MCF 10A (cell line): ENCODE measurements at regions of chr11 and their contacts with region 1.

Region 1: DNA sequence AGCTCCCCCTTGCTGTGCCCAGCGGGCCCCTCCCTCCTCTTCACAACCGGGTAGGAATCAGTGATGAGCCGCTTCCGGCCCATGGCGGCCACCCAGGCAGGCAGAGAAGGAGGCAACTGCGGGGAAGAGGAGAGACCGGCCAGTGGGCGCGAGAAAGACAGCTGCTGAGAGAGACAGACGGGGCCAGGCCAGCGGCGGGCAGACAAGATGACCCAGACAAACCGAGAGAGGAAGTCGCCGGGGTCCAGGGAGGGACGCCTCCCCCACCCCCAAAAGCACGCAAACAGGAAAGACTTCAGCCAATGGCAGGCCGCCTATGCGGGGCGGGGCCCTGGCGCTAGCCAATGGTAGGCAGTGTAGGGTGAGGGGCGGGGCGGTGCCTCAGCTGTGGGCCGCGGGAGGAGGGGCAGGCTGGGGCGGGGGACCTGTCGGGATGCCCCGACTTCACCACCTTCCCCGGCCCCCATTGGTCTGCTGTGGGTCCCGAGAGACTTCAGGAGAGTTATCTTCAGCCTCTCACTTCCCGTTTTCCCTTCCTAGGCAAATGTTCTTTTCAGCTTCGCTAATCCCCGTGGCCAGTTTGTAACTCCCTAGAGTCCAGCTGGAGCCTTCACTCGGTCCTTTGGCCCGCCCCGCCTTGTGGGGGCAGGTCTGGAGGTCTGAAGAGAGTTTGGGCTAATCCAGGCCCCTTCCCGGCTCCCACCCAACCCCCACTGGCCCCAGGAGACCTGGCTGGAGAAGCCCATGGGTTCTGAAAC is at the start of gene POLD4:
- DNase-seq: peak; percentile 92
- H3K4me3 Mint-ChIP-seq: peak within 1 kb of the TSS; percentile 85
- H3K27ac Mint-ChIP-seq: peak within 1 kb of the TSS; percentile 91
- H3K4me1 Mint-ChIP-seq: peaks cover 58% of the 10 kb centered on the region
- H3K27me3 Mint-ChIP-seq: no peaks in the 10 kb centered on the region
- CTCF ChIP-seq: no peak
- total RNA-seq, gene POLD4: 54.8 and 79.9 TPM in 2 replicates

Region 2: GRCh38 chr11:67364169-67364568 is 10.7 kb after region 1 on chr11:
- CTCF ChIA-PET with region 1: interaction called, 659 read pairs
- POLR2A ChIA-PET with region 1: interaction called, 91 read pairs
- intact Hi-C with region 1: no loop called
- DNase-seq: no peak
- H3K4me3 Mint-ChIP-seq: no peak overlapping the region
- H3K27ac Mint-ChIP-seq: no peak overlapping the region
- H3K4me1 Mint-ChIP-seq: peaks cover 35% of the 10 kb centered on the region
- H3K27me3 Mint-ChIP-seq: no peaks in the 10 kb centered on the region
- CTCF ChIP-seq: no peak

Region 3: GRCh38 chr11:67382276-67383136 is 29.0 kb after region 1 on chr11:
- CTCF ChIA-PET with region 1: interaction called, 659 read pairs
- POLR2A ChIA-PET with region 1: interaction called, 144 read pairs
- intact Hi-C with region 1: loop called (anchors 1 kb)
- DNase-seq: peak; percentile 83
- H3K4me3 Mint-ChIP-seq: no peak overlapping the region
- H3K27ac Mint-ChIP-seq: peak overlapping the region; percentile 6
- H3K4me1 Mint-ChIP-seq: peaks cover 41% of the 10 kb centered on the region
- H3K27me3 Mint-ChIP-seq: no peaks in the 10 kb centered on the region
- CTCF ChIP-seq: peak; percentile 97

Region 4: DNA sequence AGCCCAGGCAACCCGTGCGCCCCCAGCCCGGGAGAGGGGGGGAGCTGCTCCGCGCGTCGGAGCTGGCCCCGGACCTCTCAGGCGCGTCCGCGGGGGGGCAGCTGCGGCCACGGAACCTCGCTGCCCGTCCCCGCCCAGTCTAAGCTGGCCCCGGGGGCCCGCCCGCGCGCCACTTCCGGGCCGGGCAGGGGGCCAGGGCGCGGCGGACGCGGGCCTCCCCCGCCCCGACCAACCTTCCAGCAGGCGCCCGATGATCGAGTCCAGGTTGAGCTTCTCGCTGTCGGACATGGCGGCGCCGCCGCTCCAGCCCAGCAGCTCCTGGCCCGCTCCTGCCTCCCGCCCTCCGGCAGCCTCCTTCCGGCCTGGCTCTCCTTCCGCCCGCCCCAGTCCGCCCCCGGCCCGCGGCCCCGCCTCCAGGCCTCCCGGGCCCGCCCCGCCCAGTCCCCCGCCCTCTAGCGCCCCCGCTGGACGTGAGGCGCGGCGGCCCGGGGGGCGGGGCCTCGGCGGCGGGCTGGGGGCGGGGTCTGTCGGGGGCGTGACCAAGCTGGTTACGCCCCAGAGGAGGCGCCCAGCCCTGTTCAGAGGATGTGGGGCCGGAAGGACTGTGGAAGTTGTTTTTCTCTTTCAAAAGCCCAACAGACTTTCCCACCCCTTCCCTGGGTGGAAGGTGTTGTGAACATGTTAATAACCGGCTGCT is 48.1 kb after region 1 on chr11 and contains the start of gene PPP1CA:
- CTCF ChIA-PET with region 1: interaction called, 4 read pairs
- POLR2A ChIA-PET with region 1: interaction called, 15 read pairs
- intact Hi-C with region 1: no loop called
- DNase-seq: peak; percentile 84
- H3K4me3 Mint-ChIP-seq: peak within 1 kb of the TSS; percentile 71
- H3K27ac Mint-ChIP-seq: no peak within 1 kb of the TSS
- H3K4me1 Mint-ChIP-seq: peaks cover 9% of the 10 kb centered on the region
- H3K27me3 Mint-ChIP-seq: no peaks in the 10 kb centered on the region
- CTCF ChIP-seq: peak; percentile 35
- total RNA-seq, gene PPP1CA: 123 and 143 TPM in 2 replicates